ENCODE measurements at regions of chr11 and their contacts with region 1.

Region 1: DNA sequence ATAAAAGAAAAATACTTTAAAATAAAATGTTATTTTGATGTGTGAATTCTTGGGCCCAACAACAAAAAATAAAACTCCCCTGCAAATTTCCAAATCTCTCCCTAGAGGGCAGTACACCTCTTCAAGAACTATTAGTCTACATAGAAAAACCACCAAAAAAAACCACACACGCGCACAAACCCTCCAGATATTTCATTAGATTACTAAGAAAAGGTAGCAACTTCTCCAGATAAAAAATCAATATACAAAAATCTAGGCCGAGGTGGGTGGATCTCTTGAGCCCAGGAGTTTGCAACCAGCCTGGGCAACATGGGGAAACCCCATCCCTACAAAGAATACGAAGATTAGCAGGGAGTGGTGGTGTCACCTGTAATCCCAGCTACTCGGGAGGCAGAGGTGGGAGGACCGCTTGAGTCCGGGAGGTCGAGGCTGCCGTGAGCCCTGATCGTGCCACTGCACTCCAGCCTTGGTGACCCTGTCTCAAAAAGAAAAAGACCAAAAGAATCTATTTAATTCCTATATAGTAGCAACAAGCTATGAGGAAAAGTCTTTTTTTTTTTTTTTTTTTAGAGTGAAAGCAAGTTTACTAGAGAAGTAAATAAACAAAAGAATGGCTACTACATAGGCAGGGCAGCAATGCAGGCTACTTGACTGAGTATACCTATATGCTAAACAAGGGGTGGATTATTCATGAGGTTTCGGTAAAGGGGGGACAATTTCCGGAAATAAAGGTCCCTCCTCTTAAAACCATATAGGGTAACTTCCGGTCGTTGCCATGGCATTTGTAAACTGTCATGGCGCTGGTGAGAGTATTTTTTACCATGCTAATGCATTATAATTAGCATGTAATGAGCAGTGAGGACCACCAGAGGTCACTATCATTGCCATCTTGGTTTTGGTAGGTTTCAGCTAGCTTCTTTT is 13.1 kb downstream of the B3GNT6 start:
- DNase-seq: peak; percentile 87
- H3K4me3 ChIP-seq: peak overlapping the region in 1 of 2 donors; percentile 10
- H3K27ac ChIP-seq: peak overlapping the region in 1 of 2 donors; percentile 21
- H3K4me1 ChIP-seq: no peaks in the 10 kb centered on the region
- H3K27me3 ChIP-seq: no peaks in the 10 kb centered on the region
- CTCF ChIP-seq: peak; percentile 40 to 85 (median 80)
- POLR2A ChIP-seq: no peak

Region 2: DNA sequence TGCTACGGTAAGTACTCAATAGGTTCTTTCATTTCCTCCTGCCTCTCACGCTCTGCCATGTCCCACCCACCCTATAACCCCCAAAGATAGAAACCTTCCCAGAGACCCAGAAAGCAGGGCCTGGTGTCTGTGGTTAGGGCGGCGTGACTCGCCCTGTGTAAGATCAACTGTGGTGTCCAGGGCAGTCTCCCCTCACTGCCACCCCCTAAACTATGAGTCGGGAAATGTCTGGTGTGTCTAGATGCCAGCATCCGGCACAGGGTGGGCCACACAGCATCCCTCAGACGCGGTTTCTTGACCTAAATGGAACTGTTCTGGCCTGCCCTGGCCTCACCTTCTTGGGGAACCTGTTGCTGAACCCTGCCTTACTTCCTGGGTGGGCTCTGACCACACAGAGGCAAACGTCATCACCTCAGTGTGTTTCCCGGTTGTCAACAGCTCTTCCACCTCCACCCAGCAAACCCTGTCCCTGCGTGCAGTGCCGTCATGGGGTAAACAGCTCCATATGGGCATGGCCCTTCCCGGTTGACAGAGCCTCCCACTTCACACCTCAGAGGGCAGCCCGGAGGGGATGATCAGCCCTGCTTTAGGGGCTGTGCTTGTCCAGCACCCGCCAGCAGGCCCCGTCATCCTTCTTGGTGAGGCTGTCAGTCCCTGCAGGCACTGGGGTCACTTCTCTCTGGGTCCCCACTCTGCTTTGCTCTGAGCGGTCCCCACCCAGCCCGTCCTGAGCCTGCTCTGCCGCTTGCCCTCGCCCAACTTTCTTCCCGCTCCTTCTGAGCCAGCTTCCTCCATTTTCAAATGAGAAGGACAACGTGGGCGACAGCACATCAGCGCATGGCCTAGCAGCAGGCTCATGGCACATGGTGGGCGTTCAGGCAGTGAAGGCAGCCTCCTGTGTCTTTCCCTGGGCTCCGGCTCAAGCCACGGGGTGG is 847.0 kb before region 1 on chr11:
- intact Hi-C with region 1: no loop called
- DNase-seq: no peak
- H3K4me3 ChIP-seq: no peak overlapping the region
- H3K27ac ChIP-seq: no peak overlapping the region
- H3K4me1 ChIP-seq: no peaks in the 10 kb centered on the region
- H3K27me3 ChIP-seq: no peaks in the 10 kb centered on the region
- CTCF ChIP-seq: no peak
- POLR2A ChIP-seq: no peak

Region 3: GRCh38 chr11:76734456-76735420 is 312.5 kb before region 1 on chr11:
- intact Hi-C with region 1: loop called (anchors 10 kb)
- DNase-seq: peak; percentile 45
- H3K4me3 ChIP-seq: no peak overlapping the region
- H3K27ac ChIP-seq: peak overlapping the region in 1 of 2 donors; percentile 47
- H3K4me1 ChIP-seq: no peaks in the 10 kb centered on the region
- H3K27me3 ChIP-seq: no peaks in the 10 kb centered on the region
- CTCF ChIP-seq: no peak
- POLR2A ChIP-seq: no peak

Region 4: DNA sequence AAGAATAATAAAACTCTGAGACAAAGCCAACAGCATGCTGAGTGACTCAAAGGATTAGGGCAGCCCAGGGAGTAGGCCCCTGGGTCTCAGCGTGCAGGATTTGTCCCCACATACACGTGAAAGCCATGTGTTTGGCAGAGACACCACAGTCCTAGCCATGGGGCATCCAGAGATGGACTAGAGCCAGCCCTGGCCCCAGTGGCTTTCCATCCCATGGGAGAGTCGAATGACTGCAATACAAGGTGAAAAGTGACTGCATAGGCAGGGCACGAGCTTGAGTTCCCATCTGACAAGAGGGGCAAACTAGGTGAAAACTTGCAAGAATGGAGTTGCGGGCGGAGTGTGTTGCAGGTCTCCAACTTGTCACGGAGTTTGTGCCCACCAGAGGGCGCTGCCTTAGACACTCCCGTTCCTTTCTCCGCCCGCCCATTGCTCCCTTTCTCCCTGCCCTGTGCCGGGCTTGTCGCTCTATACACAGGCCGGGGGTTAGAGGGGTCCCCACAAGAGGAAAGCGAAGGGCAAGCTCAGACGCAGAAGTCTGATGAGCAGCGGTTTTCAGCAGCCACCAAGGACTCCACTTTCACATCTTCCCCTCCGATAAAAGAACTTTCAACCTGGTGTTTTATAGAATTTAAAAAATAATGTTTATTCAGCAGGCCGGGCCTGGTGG is 239.9 kb before region 1 on chr11:
- intact Hi-C with region 1: loop called (anchors 5 kb)
- DNase-seq: peak; percentile 88
- H3K4me3 ChIP-seq: no peak overlapping the region
- H3K27ac ChIP-seq: no peak overlapping the region
- H3K4me1 ChIP-seq: no peaks in the 10 kb centered on the region
- H3K27me3 ChIP-seq: no peaks in the 10 kb centered on the region
- CTCF ChIP-seq: peak; percentile 71 to 83 (median 76)
- POLR2A ChIP-seq: no peak

Region 5: GRCh38 chr11:76919887-76920746 is 127.2 kb before region 1 on chr11:
- intact Hi-C with region 1: loop called (anchors 10 kb)
- DNase-seq: peak; percentile 88
- H3K4me3 ChIP-seq: no peak overlapping the region
- H3K27ac ChIP-seq: no peak overlapping the region
- H3K4me1 ChIP-seq: no peaks in the 10 kb centered on the region
- H3K27me3 ChIP-seq: no peaks in the 10 kb centered on the region
- CTCF ChIP-seq: peak; percentile 75 to 91 (median 86)
- POLR2A ChIP-seq: no peak

Region 6: GRCh38 chr11:77091146-77091940 is 44.1 kb after region 1 on chr11:
- intact Hi-C with region 1: loop called (anchors 1 kb)
- DNase-seq: peak; percentile 84
- H3K4me3 ChIP-seq: no peak overlapping the region
- H3K27ac ChIP-seq: no peak overlapping the region
- H3K4me1 ChIP-seq: peaks cover 10% of the 10 kb centered on the region
- H3K27me3 ChIP-seq: no peaks in the 10 kb centered on the region
- CTCF ChIP-seq: peak; percentile 88 to 96 (median 95)
- POLR2A ChIP-seq: no peak

Region 7: DNA sequence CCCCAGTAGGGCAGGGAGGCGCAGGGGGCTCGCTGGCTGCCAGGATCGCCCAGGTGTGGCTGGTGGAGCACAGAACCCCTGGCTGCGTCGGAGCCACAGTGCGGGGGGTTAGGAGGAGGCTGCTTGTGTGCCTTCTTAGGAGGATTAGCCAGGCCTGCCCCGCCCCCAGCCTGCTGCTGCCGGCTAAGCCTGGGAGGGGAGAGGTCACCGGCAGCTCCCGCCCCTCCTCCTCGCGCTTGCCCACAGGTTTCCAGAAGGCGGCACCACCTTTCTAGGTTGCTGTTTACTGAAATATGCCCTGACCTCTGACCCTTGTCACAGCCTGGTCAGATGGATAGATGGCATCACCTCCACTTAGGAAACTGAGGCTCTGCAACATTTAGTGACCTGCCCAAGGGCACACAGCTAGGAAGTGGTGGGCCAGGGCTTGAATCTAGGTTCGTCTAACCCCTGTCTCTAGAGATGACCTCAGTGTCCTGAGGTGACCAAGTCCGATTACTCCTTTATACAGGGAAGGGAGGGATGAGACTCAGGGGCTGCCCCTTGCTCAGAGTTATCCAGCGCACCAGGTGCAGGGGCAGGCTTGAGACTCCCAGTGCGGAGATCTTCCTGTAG is 124.7 kb after region 1 on chr11:
- intact Hi-C with region 1: no loop called
- DNase-seq: no peak
- H3K4me3 ChIP-seq: no peak overlapping the region
- H3K27ac ChIP-seq: no peak overlapping the region
- H3K4me1 ChIP-seq: no peaks in the 10 kb centered on the region
- H3K27me3 ChIP-seq: no peaks in the 10 kb centered on the region
- CTCF ChIP-seq: no peak
- POLR2A ChIP-seq: no peak

Region 8: GRCh38 chr11:77187776-77188632 is 140.7 kb after region 1 on chr11:
- intact Hi-C with region 1: loop called (anchors 10 kb)
- DNase-seq: peak; percentile 72
- H3K4me3 ChIP-seq: no peak overlapping the region
- H3K27ac ChIP-seq: no peak overlapping the region
- H3K4me1 ChIP-seq: no peaks in the 10 kb centered on the region
- H3K27me3 ChIP-seq: no peaks in the 10 kb centered on the region
- CTCF ChIP-seq: peak; percentile 41 to 84 (median 76)
- POLR2A ChIP-seq: no peak